ENCODE measurements at regions of chr4 and their contacts with region 1.

Region 1: GRCh38 chr4:168877511-168878491 is 132.3 kb downstream of the CBR4 start:
- DNase-seq: peak; percentile 74 to 82 (median 77)
- H3K4me3 ChIP-seq: peak overlapping the region; percentile 19 to 64 (median 34)
- H3K4me3 Mint-ChIP-seq: peak overlapping the region; percentile 74 to 86
- H3K27ac ChIP-seq: peak overlapping the region in 1 of 2 donors; percentile 12
- H3K27ac Mint-ChIP-seq: peak overlapping the region in 3 of 7 donors; percentile 33 to 77 (median 40)
- H3K4me1 ChIP-seq: peaks cover 53 to 67% of the 10 kb centered on the region in 2 donors
- H3K4me1 Mint-ChIP-seq: peaks cover 60% of the 10 kb centered on the region
- H3K27me3 ChIP-seq: peaks cover 14 to 22% of the 10 kb centered on the region in 2 donors
- H3K27me3 Mint-ChIP-seq: peaks cover 23 to 32% (median 27%) of the 10 kb centered on the region in 3 donors
- CTCF ChIP-seq: peak; percentile 14

Region 2: GRCh38 chr4:168361365-168362024 is 516.3 kb before region 1 on chr4:
- intact Hi-C with region 1: no loop called
- DNase-seq: no peak
- H3K4me3 ChIP-seq: no peak overlapping the region
- H3K4me3 Mint-ChIP-seq: no peak overlapping the region
- H3K27ac ChIP-seq: no peak overlapping the region
- H3K27ac Mint-ChIP-seq: peak overlapping the region in 1 of 7 donors; percentile 39
- H3K4me1 ChIP-seq: no peaks in the 10 kb centered on the region
- H3K4me1 Mint-ChIP-seq: no peaks in the 10 kb centered on the region
- H3K27me3 ChIP-seq: no peaks in the 10 kb centered on the region
- H3K27me3 Mint-ChIP-seq: no peaks in the 10 kb centered on the region
- CTCF ChIP-seq: no peak

Region 3: GRCh38 chr4:168710353-168710946 is 167.4 kb before region 1 on chr4:
- intact Hi-C with region 1: loop called in 1 of 2 experiments (anchors 10 kb)
- DNase-seq: peak in 2 of 3 donors; percentile 27 to 51
- H3K4me3 ChIP-seq: no peak overlapping the region
- H3K4me3 Mint-ChIP-seq: no peak overlapping the region
- H3K27ac ChIP-seq: no peak overlapping the region
- H3K27ac Mint-ChIP-seq: no peak overlapping the region
- H3K4me1 ChIP-seq: peaks cover 0 to 12% of the 10 kb centered on the region in 2 donors
- H3K4me1 Mint-ChIP-seq: peaks cover 16% of the 10 kb centered on the region
- H3K27me3 ChIP-seq: no peaks in the 10 kb centered on the region
- H3K27me3 Mint-ChIP-seq: peaks cover 0 to 3% (median 2%) of the 10 kb centered on the region in 3 donors
- CTCF ChIP-seq: peak; percentile 71

Region 4: GRCh38 chr4:168723020-168723419 is 154.8 kb before region 1 on chr4:
- intact Hi-C with region 1: loop called (anchors 5 to 10 kb)
- DNase-seq: peak; percentile 30 to 58 (median 49)
- H3K4me3 ChIP-seq: peak overlapping the region in 1 of 3 experiments; percentile 4
- H3K4me3 Mint-ChIP-seq: peak overlapping the region; percentile 0 to 58
- H3K27ac ChIP-seq: no peak overlapping the region
- H3K27ac Mint-ChIP-seq: peak overlapping the region in 6 of 7 donors; percentile 48 to 82 (median 74)
- H3K4me1 ChIP-seq: peaks cover 39 to 51% of the 10 kb centered on the region in 2 donors
- H3K4me1 Mint-ChIP-seq: peaks cover 45% of the 10 kb centered on the region
- H3K27me3 ChIP-seq: no peaks in the 10 kb centered on the region
- H3K27me3 Mint-ChIP-seq: peaks cover 0 to 4% (median 0%) of the 10 kb centered on the region in 3 donors
- CTCF ChIP-seq: no peak

Region 5: GRCh38 chr4:168831919-168832762 is 45.7 kb before region 1 on chr4:
- intact Hi-C with region 1: loop called in 1 of 2 experiments (anchors 5 kb)
- DNase-seq: peak; percentile 51 to 60 (median 55)
- H3K4me3 ChIP-seq: peak overlapping the region; percentile 69 to 84 (median 77)
- H3K4me3 Mint-ChIP-seq: peak overlapping the region; percentile 86 to 93
- H3K27ac ChIP-seq: peak overlapping the region in 1 of 2 donors; percentile 27
- H3K27ac Mint-ChIP-seq: peak overlapping the region in 5 of 7 donors; percentile 22 to 84 (median 77)
- H3K4me1 ChIP-seq: peaks cover 26 to 28% of the 10 kb centered on the region in 2 donors
- H3K4me1 Mint-ChIP-seq: peaks cover 21% of the 10 kb centered on the region
- H3K27me3 ChIP-seq: peaks cover 29 to 50% of the 10 kb centered on the region in 2 donors
- H3K27me3 Mint-ChIP-seq: peaks cover 35 to 57% (median 42%) of the 10 kb centered on the region in 3 donors
- CTCF ChIP-seq: no peak

Measured in CD14-positive monocyte (primary cell).